ENCODE measurements at regions of chr22 and their contacts with region 1.

Region 1: GRCh38 chr22:32202539-32203180 is 2.2 kb downstream of the RFPL2 start:
- DNase-seq: peak; percentile 18 to 39
- ATAC-seq: peak; percentile 46 to 73 (median 70)
- H3K4me3 ChIP-seq: peak overlapping the region in 8 of 10 donors; percentile 9 to 40 (median 28)
- H3K27ac ChIP-seq: no peak overlapping the region
- H3K4me1 ChIP-seq: peaks cover 0 to 15% (median 9%) of the 10 kb centered on the region in 9 donors
- H3K27me3 ChIP-seq: peaks cover 0 to 48% (median 24%) of the 10 kb centered on the region in 7 donors
- CTCF ChIP-seq: peak in 8 of 9 donors; percentile 17 to 62 (median 44)

Region 2: DNA sequence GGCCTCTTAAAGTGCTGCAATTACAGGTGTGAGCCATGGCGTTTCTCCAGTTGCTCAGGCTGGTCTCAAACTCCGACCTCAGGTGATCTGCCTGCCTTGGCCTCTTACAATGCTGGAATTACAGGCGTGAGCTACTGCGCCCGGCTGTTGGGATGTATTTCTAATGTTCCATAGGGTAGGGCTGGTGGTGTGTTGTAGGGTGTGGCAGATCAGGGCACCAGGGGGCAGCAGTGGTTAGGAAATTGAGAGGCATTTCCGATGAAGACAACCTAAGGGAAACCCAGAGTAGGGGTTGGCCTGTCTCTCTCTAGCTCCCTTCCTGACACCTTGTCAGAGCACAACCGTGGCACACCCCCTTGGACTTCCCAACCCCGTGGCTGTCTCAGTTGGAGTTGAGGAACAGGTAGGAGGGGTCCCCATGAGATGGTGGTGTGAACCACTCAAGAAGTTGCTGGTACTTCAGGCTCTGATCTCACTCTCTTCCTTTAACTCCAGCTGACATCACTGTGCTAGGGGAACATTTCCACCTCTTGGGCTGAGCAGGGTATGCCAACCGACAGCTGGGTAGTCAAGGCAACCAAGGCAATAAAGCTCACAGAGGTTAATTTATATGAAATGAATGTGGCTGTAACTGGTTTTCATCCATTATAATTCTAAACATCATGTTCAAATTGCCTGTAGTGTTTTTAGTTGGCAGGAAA is 225.4 kb before region 1 on chr22:
- intact Hi-C with region 1: loop called in 7 of 10 experiments (anchors 5 to 10 kb)
- DNase-seq: peak; percentile 74
- ATAC-seq: peak; percentile 75 to 92 (median 86)
- H3K4me3 ChIP-seq: no peak overlapping the region
- H3K27ac ChIP-seq: no peak overlapping the region
- H3K4me1 ChIP-seq: peaks cover 0 to 6% (median 0%) of the 10 kb centered on the region in 9 donors
- H3K27me3 ChIP-seq: no peaks in the 10 kb centered on the region
- CTCF ChIP-seq: peak; percentile 42 to 72 (median 69)

Region 3: GRCh38 chr22:32322986-32323385 is 120.3 kb after region 1 on chr22:
- intact Hi-C with region 1: no loop called
- DNase-seq: no peak
- ATAC-seq: no peak
- H3K4me3 ChIP-seq: no peak overlapping the region
- H3K27ac ChIP-seq: no peak overlapping the region
- H3K4me1 ChIP-seq: no peaks in the 10 kb centered on the region
- H3K27me3 ChIP-seq: peaks cover 0 to 6% (median 0%) of the 10 kb centered on the region in 7 donors
- CTCF ChIP-seq: no peak

Region 4: DNA sequence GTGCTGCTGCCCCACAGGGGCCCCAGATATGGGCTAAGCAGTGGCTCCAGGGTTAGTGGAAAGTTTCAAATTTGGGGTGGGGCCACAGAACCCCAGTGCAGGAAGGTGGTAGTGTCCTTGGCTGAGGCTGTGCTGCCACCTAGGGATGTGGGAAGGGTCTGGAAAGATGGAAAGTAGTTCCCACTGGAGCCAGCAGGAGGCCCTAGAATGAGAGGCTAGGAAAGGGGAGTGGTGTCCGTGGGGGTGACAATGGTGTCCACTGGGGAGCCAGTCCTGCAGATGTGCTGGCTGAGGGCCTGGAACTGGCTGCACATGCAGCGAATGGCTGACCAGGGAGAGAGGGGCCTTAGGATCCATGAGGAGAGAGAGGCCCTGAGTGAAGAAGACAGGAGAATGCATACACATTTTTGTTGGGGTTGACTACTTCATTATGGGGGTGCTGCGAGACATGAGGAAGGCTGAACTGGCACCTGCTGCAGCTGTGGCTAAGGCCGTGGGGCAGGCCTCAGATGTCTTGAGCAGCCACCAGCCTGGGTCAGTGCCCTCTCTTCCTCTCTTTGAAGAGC is 176.1 kb after region 1 on chr22:
- intact Hi-C with region 1: loop called in 1 of 10 experiments (anchors 10 kb)
- DNase-seq: no peak
- ATAC-seq: peak in 5 of 8 donors; percentile 25 to 44 (median 38)
- H3K4me3 ChIP-seq: no peak overlapping the region
- H3K27ac ChIP-seq: no peak overlapping the region
- H3K4me1 ChIP-seq: no peaks in the 10 kb centered on the region
- H3K27me3 ChIP-seq: no peaks in the 10 kb centered on the region
- CTCF ChIP-seq: peak in 7 of 9 donors; percentile 44 to 66 (median 50)